ENCODE measurements at regions of chr9 and their contacts with region 1.

Region 1: GRCh38 chr9:92729735-92730155 is 34.9 kb downstream of the BICD2 start:
- H3K4me3 Mint-ChIP-seq: no peak overlapping the region
- H3K27ac Mint-ChIP-seq: no peak overlapping the region
- H3K4me1 Mint-ChIP-seq: peaks cover 69% of the 10 kb centered on the region
- H3K27me3 Mint-ChIP-seq: no peaks in the 10 kb centered on the region

Region 2: DNA sequence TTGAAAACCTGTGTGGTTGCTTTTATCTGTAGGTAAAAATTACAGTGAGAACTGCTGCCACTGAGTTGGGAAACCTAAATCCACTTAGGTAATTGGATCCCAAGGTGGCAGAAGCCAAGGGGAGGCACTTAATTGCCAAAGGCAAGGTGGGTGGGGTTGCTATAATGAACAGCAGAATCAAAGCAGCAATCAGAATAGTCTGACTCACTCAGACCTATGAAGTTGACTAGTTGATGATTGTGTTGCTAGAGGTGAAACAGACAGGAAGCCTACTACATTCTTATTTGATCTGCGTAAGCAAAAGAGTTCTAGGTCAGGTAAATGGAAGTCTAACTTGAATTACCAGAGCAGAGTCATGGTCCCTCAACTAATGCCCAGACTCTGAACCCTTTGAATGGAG is 52.2 kb after region 1 on chr9:
- intact Hi-C with region 1: loop called (anchors 5 kb)
- H3K4me3 Mint-ChIP-seq: no peak overlapping the region
- H3K27ac Mint-ChIP-seq: no peak overlapping the region
- H3K4me1 Mint-ChIP-seq: peaks cover 15% of the 10 kb centered on the region
- H3K27me3 Mint-ChIP-seq: no peaks in the 10 kb centered on the region